ENCODE measurements at regions of chr15 and their contacts with region 1.

Region 1: GRCh38 chr15:63019539-63020109 is 22.9 kb upstream of the TPM1 start:
- DNase-seq: peak; percentile 95
- ATAC-seq: peak; percentile 52
- H3K4me3 ChIP-seq: no peak overlapping the region
- H3K27ac ChIP-seq: no peak overlapping the region
- H3K4me1 ChIP-seq: peaks cover 32% of the 10 kb centered on the region
- H3K27me3 ChIP-seq: no peaks in the 10 kb centered on the region
- CTCF ChIP-seq: no peak
- POLR2A ChIP-seq: no peak
- RAD21 ChIP-seq: no peak

Region 2: GRCh38 chr15:62935300-62936081 is 84.1 kb before region 1 on chr15:
- CTCF ChIA-PET with region 1: no interaction called
- POLR2A ChIA-PET with region 1: no interaction called
- dilution Hi-C with region 1: no loop called
- in situ Hi-C with region 1: no loop called
- intact Hi-C with region 1: loop called (anchors 2 kb)
- DNase-seq: no peak
- ATAC-seq: no peak
- H3K4me3 ChIP-seq: no peak overlapping the region
- H3K27ac ChIP-seq: no peak overlapping the region
- H3K4me1 ChIP-seq: peaks cover 13% of the 10 kb centered on the region
- H3K27me3 ChIP-seq: no peaks in the 10 kb centered on the region
- CTCF ChIP-seq: no peak
- POLR2A ChIP-seq: no peak
- RAD21 ChIP-seq: no peak

Region 3: GRCh38 chr15:62964251-62964650 is 55.4 kb before region 1 on chr15:
- CTCF ChIA-PET with region 1: no interaction called
- POLR2A ChIA-PET with region 1: no interaction called
- dilution Hi-C with region 1: no loop called
- in situ Hi-C with region 1: no loop called
- intact Hi-C with region 1: no loop called
- DNase-seq: peak; percentile 12
- ATAC-seq: peak; percentile 40; the same call in 1 of the 2 replicates
- H3K4me3 ChIP-seq: no peak overlapping the region
- H3K27ac ChIP-seq: no peak overlapping the region
- H3K4me1 ChIP-seq: no peaks in the 10 kb centered on the region; the same call in 1 of the 2 replicates
- H3K27me3 ChIP-seq: no peaks in the 10 kb centered on the region; the same call in 1 of the 2 replicates
- CTCF ChIP-seq: no peak
- POLR2A ChIP-seq: no peak
- RAD21 ChIP-seq: no peak

Region 4: DNA sequence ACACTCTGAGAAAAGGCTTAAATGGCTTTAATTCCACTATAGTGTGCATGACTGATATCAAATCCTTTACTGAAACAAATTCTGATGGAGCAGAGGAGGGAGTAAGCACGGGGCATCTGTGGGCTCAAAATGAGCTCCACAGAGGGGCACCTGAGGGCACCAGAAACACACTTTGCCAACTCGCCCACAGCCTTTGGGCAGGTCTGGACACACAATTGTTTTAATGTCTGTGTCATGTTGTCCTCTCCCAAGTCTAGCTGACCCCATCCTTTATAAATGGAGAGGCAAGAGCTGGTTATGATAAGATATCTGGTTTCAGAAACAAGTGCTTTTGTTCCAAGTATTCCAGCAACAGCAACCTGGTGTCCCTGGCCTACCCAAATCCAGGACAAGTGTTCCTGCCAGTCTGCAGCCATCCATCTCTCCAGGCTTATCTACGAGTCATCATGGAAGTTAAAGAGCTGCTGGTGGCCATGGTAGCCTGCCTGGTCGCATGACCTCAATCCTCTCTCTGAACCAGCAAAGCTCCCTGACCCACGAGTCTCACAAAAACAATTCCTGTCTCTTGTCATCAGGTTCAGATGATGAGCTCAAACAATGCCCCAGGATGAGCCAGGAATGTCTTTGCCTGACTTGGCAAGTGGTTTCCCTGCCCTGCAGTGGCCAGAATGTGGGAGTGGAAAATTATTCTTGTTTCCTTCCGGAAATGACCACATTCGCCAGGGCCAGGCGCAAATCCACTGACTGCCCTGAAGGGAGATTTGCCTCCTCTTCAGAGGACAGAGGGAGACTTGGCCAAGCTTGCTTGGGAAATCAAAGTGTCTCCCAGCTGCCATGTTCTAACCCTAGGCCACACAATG is 41.4 kb before region 1 on chr15:
- CTCF ChIA-PET with region 1: no interaction called
- POLR2A ChIA-PET with region 1: no interaction called
- dilution Hi-C with region 1: no loop called
- in situ Hi-C with region 1: no loop called
- intact Hi-C with region 1: loop called (anchors 5 kb)
- DNase-seq: peak; percentile 44
- ATAC-seq: peak; percentile 41; the same call in 1 of the 2 replicates
- H3K4me3 ChIP-seq: no peak overlapping the region
- H3K27ac ChIP-seq: no peak overlapping the region
- H3K4me1 ChIP-seq: peaks cover 21% of the 10 kb centered on the region
- H3K27me3 ChIP-seq: no peaks in the 10 kb centered on the region
- CTCF ChIP-seq: no peak
- POLR2A ChIP-seq: no peak
- RAD21 ChIP-seq: no peak